ENCODE measurements at regions of chr6 and their contacts with region 1.

Region 1: GRCh38 chr6:135506270-135506997 is 8.9 kb upstream of the AHI1 start:
- DNase-seq: no peak
- H3K4me3 ChIP-seq: no peak overlapping the region
- H3K27ac ChIP-seq: no peak overlapping the region
- H3K4me1 ChIP-seq: no peaks in the 10 kb centered on the region
- H3K27me3 ChIP-seq: no peaks in the 10 kb centered on the region
- CTCF ChIP-seq: peak in 3 of 4 experiments; percentile 24 to 42 (median 42)
- EP300 ChIP-seq: no peak
- POLR2A ChIP-seq: no peak

Region 2: DNA sequence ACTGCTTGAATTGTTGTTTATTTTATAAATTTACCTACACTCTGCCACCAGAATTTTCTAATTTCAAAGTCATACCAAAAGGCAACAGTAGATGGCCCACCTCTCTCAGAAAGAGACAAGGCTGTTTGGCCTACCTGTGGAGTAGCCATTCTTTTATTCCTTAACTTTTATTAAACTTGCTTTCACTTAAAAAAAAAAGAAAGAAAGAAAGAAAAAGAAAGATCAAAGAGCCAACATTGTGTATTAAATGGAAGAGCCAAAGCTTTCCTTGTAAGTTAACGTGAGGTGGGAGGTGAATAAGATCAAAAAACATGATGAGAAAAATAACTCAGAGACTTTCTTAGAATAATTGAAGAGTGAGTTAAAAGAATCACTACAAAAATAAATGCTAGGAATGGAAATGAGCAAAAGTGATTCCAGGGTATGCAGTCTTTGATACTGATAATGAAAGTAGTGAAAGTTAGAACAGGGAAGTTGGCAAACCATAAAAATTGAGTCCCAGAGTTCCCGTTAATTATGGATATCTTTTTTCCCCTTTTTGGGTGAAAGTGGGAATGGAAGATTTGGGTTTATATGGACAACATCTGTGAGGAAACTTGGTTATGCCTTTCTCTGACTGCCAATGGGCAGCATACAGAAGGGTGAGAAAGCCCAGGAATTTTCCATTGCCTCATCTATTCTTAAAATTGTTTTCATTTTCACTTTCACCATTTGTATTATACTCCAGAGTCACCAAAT is 361.2 kb before region 1 on chr6:
- intact Hi-C with region 1: no loop called
- DNase-seq: no peak
- H3K4me3 ChIP-seq: no peak overlapping the region
- H3K27ac ChIP-seq: no peak overlapping the region
- H3K4me1 ChIP-seq: no peaks in the 10 kb centered on the region
- H3K27me3 ChIP-seq: no peaks in the 10 kb centered on the region
- CTCF ChIP-seq: peak in 1 of 4 experiments; percentile 34
- EP300 ChIP-seq: no peak
- POLR2A ChIP-seq: no peak

Region 3: GRCh38 chr6:135488023-135488422 is 18.4 kb before region 1 on chr6:
- intact Hi-C with region 1: no loop called
- DNase-seq: no peak
- H3K4me3 ChIP-seq: no peak overlapping the region
- H3K27ac ChIP-seq: no peak overlapping the region
- H3K4me1 ChIP-seq: peaks cover 0 to 4% (median 0%) of the 10 kb centered on the region in 4 donors
- H3K27me3 ChIP-seq: no peaks in the 10 kb centered on the region
- CTCF ChIP-seq: no peak
- EP300 ChIP-seq: no peak
- POLR2A ChIP-seq: no peak

Region 4: GRCh38 chr6:136317021-136317694 is 810.7 kb after region 1 on chr6:
- intact Hi-C with region 1: loop called (anchors 5 kb)
- DNase-seq: no peak
- H3K4me3 ChIP-seq: no peak overlapping the region
- H3K27ac ChIP-seq: no peak overlapping the region
- H3K4me1 ChIP-seq: no peaks in the 10 kb centered on the region
- H3K27me3 ChIP-seq: no peaks in the 10 kb centered on the region
- CTCF ChIP-seq: peak; percentile 52 to 77 (median 63)
- EP300 ChIP-seq: no peak
- POLR2A ChIP-seq: no peak